PC-9 (cell line): ENCODE measurements at regions of chr2 and their contacts with region 1.

Region 1: DNA sequence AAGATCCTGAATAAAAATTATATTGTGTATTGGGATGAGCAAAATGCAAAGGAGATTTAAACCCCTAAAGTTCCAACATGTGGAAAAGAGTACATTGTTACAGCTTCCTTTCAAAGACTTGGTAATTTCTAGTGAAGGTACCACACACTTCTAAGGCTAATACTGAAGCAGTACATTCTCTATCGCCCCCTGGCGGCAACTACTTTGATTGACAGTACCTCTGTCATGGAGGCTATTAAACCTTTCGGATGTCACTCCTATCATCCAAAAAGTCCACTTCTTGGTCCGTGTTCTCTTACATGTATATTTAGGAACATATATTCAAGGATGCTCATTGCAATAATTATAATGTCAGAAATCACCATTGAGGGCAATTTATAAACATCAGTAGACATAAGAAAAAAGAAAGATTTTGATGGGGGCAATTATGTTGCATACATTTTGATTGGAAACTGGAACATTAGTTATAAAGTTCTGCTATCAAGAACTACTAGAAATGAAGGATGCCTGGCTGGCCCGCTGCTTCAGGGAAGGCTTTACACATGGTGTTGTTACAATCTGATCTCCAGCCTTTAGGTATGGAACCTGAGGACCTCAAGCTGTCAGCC is 601.6 kb downstream of the CPS1 start:
- DNase-seq: peak in 1 of 2 experiments; percentile 40
- H3K4me3 ChIP-seq: no peak overlapping the region
- H3K27ac ChIP-seq: no peak overlapping the region
- H3K4me1 ChIP-seq: no peaks in the 10 kb centered on the region
- H3K27me3 ChIP-seq: no peaks in the 10 kb centered on the region
- CTCF ChIP-seq: peak; percentile 79

Region 2: DNA sequence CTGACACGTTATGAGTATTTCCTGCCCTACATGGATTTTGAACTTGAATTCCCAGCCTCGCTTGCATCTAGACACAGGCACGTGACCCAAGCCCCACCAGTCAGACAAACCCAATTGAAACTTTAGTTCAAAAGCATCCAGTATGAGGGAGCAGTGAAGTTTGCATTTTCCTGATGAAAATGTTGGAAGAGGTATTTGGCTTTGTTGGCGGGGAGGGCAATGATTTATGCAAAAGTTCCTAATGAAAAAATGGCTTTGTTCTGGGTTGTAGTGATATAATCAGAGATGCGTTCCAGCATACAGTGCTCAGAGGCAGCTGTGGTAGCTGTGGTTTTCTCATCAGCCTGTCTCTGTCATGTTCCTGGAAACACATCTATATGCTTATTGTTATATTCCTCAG is 638.4 kb before region 1 on chr2:
- CTCF ChIA-PET with region 1: no interaction called
- POLR2A ChIA-PET with region 1: no interaction called
- intact Hi-C with region 1: no loop called
- DNase-seq: no peak
- H3K4me3 ChIP-seq: no peak overlapping the region
- H3K27ac ChIP-seq: no peak overlapping the region
- H3K4me1 ChIP-seq: no peaks in the 10 kb centered on the region
- H3K27me3 ChIP-seq: no peaks in the 10 kb centered on the region
- CTCF ChIP-seq: no peak

Region 3: GRCh38 chr2:211085056-211085680 is 72.8 kb before region 1 on chr2:
- CTCF ChIA-PET with region 1: no interaction called
- POLR2A ChIA-PET with region 1: no interaction called
- intact Hi-C with region 1: loop called (anchors 5 kb)
- DNase-seq: no peak
- H3K4me3 ChIP-seq: no peak overlapping the region
- H3K27ac ChIP-seq: no peak overlapping the region
- H3K4me1 ChIP-seq: no peaks in the 10 kb centered on the region
- H3K27me3 ChIP-seq: no peaks in the 10 kb centered on the region
- CTCF ChIP-seq: peak; percentile 68